A673 (cell line): ENCODE measurements at regions of chr4 and their contacts with region 1.

Region 1: DNA sequence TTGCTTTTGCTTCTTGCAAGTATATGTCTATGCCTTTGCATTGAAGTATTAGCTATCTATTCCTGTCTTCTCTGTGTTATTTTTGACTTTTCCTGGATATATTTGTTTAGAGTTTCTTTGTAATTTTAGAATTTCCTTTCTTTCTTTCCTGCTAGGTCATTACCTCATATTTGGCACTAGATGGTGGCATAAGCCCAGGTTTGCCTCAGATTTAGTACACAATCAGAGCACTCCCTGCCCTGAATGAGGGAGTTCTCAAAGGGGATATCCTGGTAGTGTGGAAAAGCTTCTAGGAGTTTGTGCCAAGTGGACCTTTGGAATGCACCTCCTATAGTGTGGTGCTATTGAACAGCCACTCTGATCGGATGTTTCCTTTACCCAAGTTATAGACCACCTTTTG is 181.6 kb downstream of the UGT8 start:
- DNase-seq: peak; percentile 85
- H3K4me3 ChIP-seq: no peak overlapping the region
- H3K27ac ChIP-seq: no peak overlapping the region
- H3K4me1 ChIP-seq: peaks cover 36% of the 10 kb centered on the region
- H3K27me3 ChIP-seq: no peaks in the 10 kb centered on the region
- CTCF ChIP-seq: peak; percentile 75

Region 2: GRCh38 chr4:114694770-114695169 is 85.4 kb before region 1 on chr4:
- CTCF ChIA-PET with region 1: no interaction called
- POLR2A ChIA-PET with region 1: no interaction called
- intact Hi-C with region 1: no loop called
- DNase-seq: peak; percentile 51
- H3K4me3 ChIP-seq: no peak overlapping the region
- H3K27ac ChIP-seq: no peak overlapping the region
- H3K4me1 ChIP-seq: peaks cover 6% of the 10 kb centered on the region
- H3K27me3 ChIP-seq: no peaks in the 10 kb centered on the region
- CTCF ChIP-seq: peak; percentile 66

Region 3: GRCh38 chr4:114911111-114911510 is 130.9 kb after region 1 on chr4:
- CTCF ChIA-PET with region 1: no interaction called
- POLR2A ChIA-PET with region 1: no interaction called
- intact Hi-C with region 1: no loop called
- DNase-seq: peak; percentile 31
- H3K4me3 ChIP-seq: no peak overlapping the region
- H3K27ac ChIP-seq: no peak overlapping the region
- H3K4me1 ChIP-seq: peaks cover 7% of the 10 kb centered on the region
- H3K27me3 ChIP-seq: no peaks in the 10 kb centered on the region
- CTCF ChIP-seq: no peak

Region 4: DNA sequence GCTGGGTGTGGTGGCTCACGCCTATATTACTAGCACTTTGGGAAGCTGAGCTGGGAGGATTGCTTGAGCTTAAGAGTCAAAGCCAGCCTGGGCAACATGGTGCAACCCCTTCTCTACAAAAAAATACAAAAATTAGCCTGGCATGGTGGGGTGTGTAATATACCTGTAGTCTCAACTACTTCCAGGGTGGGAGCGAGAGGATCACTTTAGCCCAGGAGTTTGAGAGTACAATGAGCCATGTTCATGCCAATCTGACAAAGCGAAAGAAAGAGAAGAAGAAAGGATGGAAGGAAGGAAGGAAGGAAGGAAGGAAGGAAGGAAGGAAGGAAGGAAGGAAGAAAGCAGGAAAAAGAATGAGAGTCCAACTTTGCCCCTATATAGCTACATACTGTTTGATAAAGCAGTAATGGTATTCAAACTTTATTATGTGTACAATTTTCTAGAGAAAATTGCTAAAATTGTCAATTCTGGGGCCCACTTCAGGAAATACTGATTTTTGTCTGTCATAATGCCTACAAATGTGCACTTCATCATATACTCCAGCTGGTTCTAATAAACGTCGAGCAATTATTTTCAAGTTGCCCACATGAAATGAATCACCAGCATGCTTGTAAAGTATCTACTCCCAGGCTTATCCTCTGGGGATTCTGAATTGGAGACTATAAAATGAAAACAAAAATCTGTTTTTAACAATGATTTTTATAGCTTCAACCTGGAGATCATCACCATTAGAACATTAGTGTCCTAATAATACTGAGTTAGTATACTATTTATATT is 200.9 kb after region 1 on chr4:
- CTCF ChIA-PET with region 1: no interaction called
- POLR2A ChIA-PET with region 1: no interaction called
- intact Hi-C with region 1: loop called (anchors 2 kb)
- DNase-seq: peak; percentile 93
- H3K4me3 ChIP-seq: no peak overlapping the region
- H3K27ac ChIP-seq: peak overlapping the region; percentile 77
- H3K4me1 ChIP-seq: peaks cover 53% of the 10 kb centered on the region
- H3K27me3 ChIP-seq: no peaks in the 10 kb centered on the region
- CTCF ChIP-seq: no peak

Region 5: DNA sequence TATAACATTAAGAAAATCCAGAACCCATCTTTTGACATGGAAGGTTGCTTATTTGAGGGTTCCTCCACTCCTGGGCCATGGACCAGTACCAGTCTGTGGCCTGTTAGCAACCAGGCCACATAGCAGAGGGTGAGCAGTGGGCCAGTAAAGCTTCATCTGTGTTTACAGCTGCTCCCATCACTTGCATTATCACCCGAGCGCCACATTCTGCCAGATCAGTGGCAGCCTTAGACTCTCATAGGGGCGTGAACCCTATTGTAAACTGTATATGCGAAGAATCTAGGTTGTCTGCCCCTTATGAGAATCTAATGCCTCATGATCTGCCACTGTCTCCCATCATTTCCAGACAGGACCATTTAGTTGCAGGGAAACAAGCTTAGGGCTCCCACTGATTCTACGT is 274.6 kb after region 1 on chr4:
- CTCF ChIA-PET with region 1: no interaction called
- POLR2A ChIA-PET with region 1: no interaction called
- intact Hi-C with region 1: loop called (anchors 10 kb)
- DNase-seq: peak; percentile 61
- H3K4me3 ChIP-seq: no peak overlapping the region
- H3K27ac ChIP-seq: no peak overlapping the region
- H3K4me1 ChIP-seq: peaks cover 14% of the 10 kb centered on the region
- H3K27me3 ChIP-seq: no peaks in the 10 kb centered on the region
- CTCF ChIP-seq: peak; percentile 45

Region 6: GRCh38 chr4:115113125-115114106 is 333.2 kb after region 1 on chr4 and contains the start of gene NDST4:
- CTCF ChIA-PET with region 1: no interaction called
- POLR2A ChIA-PET with region 1: no interaction called
- intact Hi-C with region 1: loop called (anchors 5 kb)
- DNase-seq: peak; percentile 98
- H3K4me3 ChIP-seq: peak within 1 kb of the TSS; percentile 56
- H3K27ac ChIP-seq: peak within 1 kb of the TSS; percentile 81
- H3K4me1 ChIP-seq: peaks cover 22% of the 10 kb centered on the region
- H3K27me3 ChIP-seq: no peaks in the 10 kb centered on the region
- CTCF ChIP-seq: no peak
- total RNA-seq, gene NDST4: 32.8 and 38.9 TPM in 2 replicates

Region 7: GRCh38 chr4:115234405-115235093 is 454.3 kb after region 1 on chr4:
- CTCF ChIA-PET with region 1: no interaction called
- POLR2A ChIA-PET with region 1: no interaction called
- intact Hi-C with region 1: loop called (anchors 10 kb)
- DNase-seq: peak; percentile 86
- H3K4me3 ChIP-seq: no peak overlapping the region
- H3K27ac ChIP-seq: peak overlapping the region; percentile 41
- H3K4me1 ChIP-seq: peaks cover 33% of the 10 kb centered on the region
- H3K27me3 ChIP-seq: no peaks in the 10 kb centered on the region
- CTCF ChIP-seq: peak; percentile 68

Region 8: DNA sequence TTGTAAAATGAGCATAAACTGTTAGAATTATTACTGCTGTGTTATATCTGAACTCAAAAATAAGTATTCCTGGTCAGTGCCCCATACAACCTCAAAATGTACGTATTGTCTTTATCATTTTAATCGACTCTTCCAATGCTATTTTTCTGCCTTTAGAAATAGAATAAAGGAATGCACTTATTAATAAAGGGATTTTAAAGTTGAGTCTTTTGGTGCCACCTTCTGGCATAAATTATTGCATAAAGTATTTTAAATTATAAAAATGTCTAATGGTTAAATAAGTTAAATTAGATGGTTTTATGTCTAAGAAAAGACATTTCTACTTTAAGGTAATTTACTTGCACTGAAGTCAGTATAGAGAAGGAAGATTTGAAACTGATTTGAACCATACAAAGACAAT is 757.2 kb after region 1 on chr4:
- CTCF ChIA-PET with region 1: no interaction called
- POLR2A ChIA-PET with region 1: no interaction called
- intact Hi-C with region 1: loop called (anchors 2 kb)
- DNase-seq: peak; percentile 48
- H3K4me3 ChIP-seq: no peak overlapping the region
- H3K27ac ChIP-seq: no peak overlapping the region
- H3K4me1 ChIP-seq: peaks cover 14% of the 10 kb centered on the region
- H3K27me3 ChIP-seq: no peaks in the 10 kb centered on the region
- CTCF ChIP-seq: peak; percentile 56; the same call in 1 of the 2 replicates

Region 9: GRCh38 chr4:115851918-115852766 is 1071.9 kb after region 1 on chr4:
- CTCF ChIA-PET with region 1: no interaction called
- POLR2A ChIA-PET with region 1: no interaction called
- intact Hi-C with region 1: loop called (anchors 5 kb)
- DNase-seq: peak; percentile 87
- H3K4me3 ChIP-seq: no peak overlapping the region
- H3K27ac ChIP-seq: no peak overlapping the region
- H3K4me1 ChIP-seq: peaks cover 5% of the 10 kb centered on the region
- H3K27me3 ChIP-seq: no peaks in the 10 kb centered on the region
- CTCF ChIP-seq: peak; percentile 86